ENCODE measurements at regions of chrX and their contacts with region 1.

Region 1: DNA sequence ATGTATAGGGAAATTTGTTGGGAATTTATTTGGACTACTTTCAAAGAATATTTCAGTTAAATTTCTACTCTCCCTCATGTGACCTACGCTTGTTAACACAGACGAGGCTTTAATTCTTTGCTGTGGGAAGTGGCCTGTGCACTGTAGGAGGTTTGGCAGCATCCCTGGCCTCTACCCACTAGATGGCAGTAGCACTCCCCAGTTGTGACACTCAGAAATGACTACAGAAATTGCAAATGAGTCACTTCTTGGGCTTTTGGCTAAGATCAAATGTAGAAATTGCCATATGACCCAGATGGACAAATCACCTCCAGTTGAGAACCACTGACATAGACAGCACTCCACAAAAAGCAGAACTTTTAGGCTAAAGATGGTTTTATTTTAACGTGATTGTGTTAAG is 22.1 kb downstream of the PIR start:
- DNase-seq: peak; percentile 53 to 86 (median 83)
- H3K4me3 ChIP-seq: no peak overlapping the region
- H3K27ac ChIP-seq: no peak overlapping the region
- H3K4me1 ChIP-seq: peaks cover 0 to 2% (median 0%) of the 10 kb centered on the region in 4 experiments
- H3K27me3 ChIP-seq: peaks cover 0 to 20% (median 0%) of the 10 kb centered on the region in 5 experiments

Region 2: GRCh38 chrX:14899607-14900006 is 571.4 kb before region 1 on chrX:
- CTCF ChIA-PET with region 1: no interaction called
- POLR2A ChIA-PET with region 1: no interaction called
- DNase-seq: peak in 2 of 3 donors; percentile 27 to 48
- H3K4me3 ChIP-seq: no peak overlapping the region
- H3K27ac ChIP-seq: no peak overlapping the region
- H3K4me1 ChIP-seq: no peaks in the 10 kb centered on the region
- H3K27me3 ChIP-seq: peaks cover 0 to 4% (median 0%) of the 10 kb centered on the region in 5 experiments

Region 3: GRCh38 chrX:15299941-15300851 is 170.8 kb before region 1 on chrX:
- CTCF ChIA-PET with region 1: interaction called, 14 read pairs
- POLR2A ChIA-PET with region 1: no interaction called
- DNase-seq: peak; percentile 12 to 49 (median 32)
- H3K4me3 ChIP-seq: no peak overlapping the region
- H3K27ac ChIP-seq: no peak overlapping the region
- H3K4me1 ChIP-seq: peaks cover 0 to 16% (median 14%) of the 10 kb centered on the region in 4 experiments
- H3K27me3 ChIP-seq: peaks cover 0 to 8% (median 0%) of the 10 kb centered on the region in 5 experiments

Region 4: DNA sequence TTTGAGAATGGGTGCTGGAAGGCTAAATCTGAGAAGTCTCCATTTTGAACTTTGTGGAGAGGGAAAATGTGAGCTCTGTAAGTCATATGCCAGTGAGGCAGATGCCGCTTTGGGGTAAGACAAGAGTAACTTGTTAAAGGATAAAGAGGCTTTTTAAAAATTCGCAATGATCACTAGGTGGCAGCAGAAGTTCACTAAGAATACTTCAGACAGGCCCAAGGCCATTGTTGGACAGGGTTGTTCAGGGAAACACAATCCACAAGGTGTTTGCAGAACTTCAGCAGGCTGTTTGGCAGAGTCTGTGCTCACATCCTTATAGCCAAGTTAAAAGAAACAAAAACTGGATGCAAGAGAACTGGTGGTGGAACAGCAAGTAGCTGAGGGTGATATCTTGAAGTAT is 122.0 kb before region 1 on chrX:
- CTCF ChIA-PET with region 1: interaction called, 92 read pairs
- POLR2A ChIA-PET with region 1: no interaction called
- DNase-seq: peak; percentile 61 to 87 (median 84)
- H3K4me3 ChIP-seq: no peak overlapping the region
- H3K27ac ChIP-seq: no peak overlapping the region
- H3K4me1 ChIP-seq: no peaks in the 10 kb centered on the region
- H3K27me3 ChIP-seq: peaks cover 0 to 19% (median 0%) of the 10 kb centered on the region in 5 experiments

Region 5: DNA sequence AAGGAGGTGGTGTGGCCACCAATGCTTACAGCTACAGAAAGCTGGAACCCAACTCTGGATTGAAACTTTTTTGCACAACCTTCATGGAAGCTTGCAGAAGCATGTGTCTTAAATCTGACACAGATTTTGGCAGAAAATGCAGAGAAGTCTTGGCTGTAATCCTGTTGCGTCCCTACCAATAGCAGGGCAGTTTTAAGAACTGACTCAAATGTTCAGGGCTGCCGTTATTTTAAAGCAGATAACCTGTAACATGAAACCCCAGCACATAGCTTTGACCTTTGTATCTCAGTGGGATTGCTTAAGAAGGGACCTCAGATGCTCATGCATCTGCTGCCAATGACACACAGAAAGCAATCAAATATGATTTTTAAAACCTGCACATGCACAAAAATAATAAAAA is 86.7 kb before region 1 on chrX and contains the start of gene VEGFD:
- CTCF ChIA-PET with region 1: interaction called, 23 read pairs
- POLR2A ChIA-PET with region 1: no interaction called
- DNase-seq: no peak
- H3K4me3 ChIP-seq: no peak within 1 kb of the TSS
- H3K27ac ChIP-seq: no peak within 1 kb of the TSS
- H3K4me1 ChIP-seq: no peaks in the 10 kb centered on the region
- H3K27me3 ChIP-seq: peaks cover 0 to 16% (median 0%) of the 10 kb centered on the region in 5 experiments

Region 6: GRCh38 chrX:15493118-15493962 is 22.3 kb after region 1 on chrX and contains the start of gene PIR:
- CTCF ChIA-PET with region 1: interaction called, 10 read pairs
- POLR2A ChIA-PET with region 1: no interaction called
- DNase-seq: peak; percentile 69 to 83 (median 80)
- H3K4me3 ChIP-seq: peak within 1 kb of the TSS; percentile 42 to 74 (median 59)
- H3K27ac ChIP-seq: peak within 1 kb of the TSS in 1 of 2 experiments; percentile 56
- H3K4me1 ChIP-seq: peaks cover 0 to 10% (median 4%) of the 10 kb centered on the region in 4 experiments
- H3K27me3 ChIP-seq: peaks cover 0 to 32% (median 0%) of the 10 kb centered on the region in 5 experiments

Region 7: GRCh38 chrX:15564981-15565579 is 94.1 kb after region 1 on chrX:
- CTCF ChIA-PET with region 1: interaction called, 12 read pairs
- POLR2A ChIA-PET with region 1: no interaction called
- DNase-seq: peak; percentile 52 to 70 (median 65)
- H3K4me3 ChIP-seq: no peak overlapping the region
- H3K27ac ChIP-seq: no peak overlapping the region
- H3K4me1 ChIP-seq: peaks cover 0 to 2% (median 0%) of the 10 kb centered on the region in 4 experiments
- H3K27me3 ChIP-seq: peaks cover 0 to 19% (median 0%) of the 10 kb centered on the region in 5 experiments

Measured in common myeloid progenitor, CD34-positive (primary cell).